ENCODE measurements at regions of chr4 and their contacts with region 1.

Region 1: DNA sequence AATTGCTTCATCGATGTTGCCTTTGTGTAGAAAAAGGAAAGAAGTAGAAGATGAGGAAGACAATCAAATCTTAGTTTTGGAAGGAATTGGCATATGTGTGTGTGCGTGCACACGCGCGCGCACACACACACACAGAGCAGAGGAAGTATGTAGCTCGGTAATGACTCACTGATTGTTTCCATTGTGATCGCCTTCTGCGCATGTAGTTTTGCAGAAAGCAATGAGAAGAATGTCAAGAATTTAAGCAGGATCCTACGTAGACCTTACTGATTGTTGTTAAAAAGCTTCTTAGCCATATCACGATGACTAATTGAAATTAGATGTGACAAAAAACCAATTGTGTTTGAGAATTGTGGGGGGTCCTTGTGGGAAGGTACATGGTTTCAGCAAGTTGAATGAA is 12.8 kb upstream of the LIMCH1 start:
- DNase-seq: peak; percentile 55 to 63
- H3K4me3 ChIP-seq: no peak overlapping the region
- H3K4me3 Mint-ChIP-seq: peak overlapping the region; percentile 64
- H3K27ac Mint-ChIP-seq: peak overlapping the region; percentile 90
- H3K4me1 ChIP-seq: peaks cover 26% of the 10 kb centered on the region
- H3K4me1 Mint-ChIP-seq: peaks cover 32% of the 10 kb centered on the region
- H3K27me3 ChIP-seq: no peaks in the 10 kb centered on the region
- H3K27me3 Mint-ChIP-seq: no peaks in the 10 kb centered on the region
- CTCF ChIP-seq: no peak

Region 2: DNA sequence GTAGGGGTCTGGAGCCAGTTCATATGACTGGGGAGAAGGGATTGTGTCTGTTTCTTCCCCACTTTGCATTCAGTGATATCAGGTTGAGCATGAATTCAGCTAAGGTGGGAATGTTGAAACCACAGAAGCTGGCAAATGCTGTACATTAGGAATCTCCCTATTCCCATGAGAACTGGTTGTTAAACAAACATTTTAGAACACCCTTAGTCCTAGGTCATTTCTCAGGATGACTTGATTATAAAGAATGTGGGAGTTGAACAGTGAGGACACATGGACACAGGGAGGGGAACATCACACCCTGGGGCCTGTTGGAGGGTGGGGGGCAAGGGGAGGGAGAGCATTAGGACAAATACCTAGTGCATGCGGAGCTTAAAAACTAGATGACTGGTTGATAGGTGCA is 49.7 kb before region 1 on chr4:
- CTCF ChIA-PET with region 1: no interaction called
- POLR2A ChIA-PET with region 1: no interaction called
- intact Hi-C with region 1: no loop called
- DNase-seq: peak; percentile 9 to 42
- H3K4me3 ChIP-seq: no peak overlapping the region
- H3K4me3 Mint-ChIP-seq: no peak overlapping the region
- H3K27ac Mint-ChIP-seq: no peak overlapping the region
- H3K4me1 ChIP-seq: peaks cover 9% of the 10 kb centered on the region
- H3K4me1 Mint-ChIP-seq: peaks cover 9% of the 10 kb centered on the region
- H3K27me3 ChIP-seq: no peaks in the 10 kb centered on the region
- H3K27me3 Mint-ChIP-seq: no peaks in the 10 kb centered on the region
- CTCF ChIP-seq: no peak

Region 3: DNA sequence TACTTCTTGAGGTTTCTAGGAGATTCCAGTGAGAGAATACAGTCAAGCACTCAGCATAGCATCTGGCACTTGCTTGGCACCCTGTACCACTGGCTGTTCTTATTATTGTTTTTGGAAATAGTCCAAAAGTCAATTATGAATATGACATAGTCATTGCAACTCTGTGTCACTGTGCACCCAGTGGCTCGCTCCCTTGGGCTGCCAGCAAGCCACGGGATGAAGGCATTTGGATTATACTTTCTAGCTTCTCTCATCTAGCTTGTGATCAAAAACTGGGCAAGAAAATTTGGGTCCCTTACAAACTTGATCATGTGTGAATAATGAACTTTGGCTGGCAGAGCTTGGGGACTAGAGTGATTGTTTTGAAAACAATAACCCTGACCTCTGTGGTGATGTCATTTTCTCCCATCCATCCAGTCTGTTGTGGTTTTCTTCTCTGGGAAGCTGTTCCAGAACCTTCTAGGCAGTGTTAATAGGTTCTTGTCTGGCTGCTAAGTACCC is 19.9 kb before region 1 on chr4:
- CTCF ChIA-PET with region 1: interaction called, 4 read pairs
- POLR2A ChIA-PET with region 1: no interaction called
- intact Hi-C with region 1: loop called (anchors 2 kb)
- DNase-seq: no peak
- H3K4me3 ChIP-seq: no peak overlapping the region
- H3K4me3 Mint-ChIP-seq: no peak overlapping the region
- H3K27ac Mint-ChIP-seq: peak overlapping the region; percentile 72
- H3K4me1 ChIP-seq: peaks cover 36% of the 10 kb centered on the region
- H3K4me1 Mint-ChIP-seq: peaks cover 35% of the 10 kb centered on the region
- H3K27me3 ChIP-seq: no peaks in the 10 kb centered on the region
- H3K27me3 Mint-ChIP-seq: no peaks in the 10 kb centered on the region
- CTCF ChIP-seq: no peak

Measured in Caco-2 (cell line).